ENCODE measurements at regions of chr16 and their contacts with region 1.

Region 1: GRCh38 chr16:2777231-2777902 is at the start of gene ELOB:
- DNase-seq: peak; percentile 92
- H3K4me3 Mint-ChIP-seq: peak within 1 kb of the TSS; percentile 88
- H3K27ac Mint-ChIP-seq: peak within 1 kb of the TSS; percentile 96
- H3K4me1 Mint-ChIP-seq: peaks cover 25% of the 10 kb centered on the region
- H3K27me3 Mint-ChIP-seq: no peaks in the 10 kb centered on the region
- total RNA-seq, gene ELOB: 141 to 150 TPM

Region 2: GRCh38 chr16:2682209-2683021 is 95.0 kb before region 1 on chr16 and contains the start of gene KCTD5:
- CTCF ChIA-PET with region 1: no interaction called
- POLR2A ChIA-PET with region 1: interaction called, 14 read pairs
- DNase-seq: peak; percentile 97
- H3K4me3 Mint-ChIP-seq: peak within 1 kb of the TSS; percentile 97
- H3K27ac Mint-ChIP-seq: peak within 1 kb of the TSS; percentile 85
- H3K4me1 Mint-ChIP-seq: peaks cover 31% of the 10 kb centered on the region
- H3K27me3 Mint-ChIP-seq: no peaks in the 10 kb centered on the region
- total RNA-seq, gene KCTD5: 35.9 to 39.8 TPM